Naive thymus-derived CD4-positive, alpha-beta T cell (primary cell): ENCODE measurements at regions of chr2 and their contacts with region 1.

Region 1: DNA sequence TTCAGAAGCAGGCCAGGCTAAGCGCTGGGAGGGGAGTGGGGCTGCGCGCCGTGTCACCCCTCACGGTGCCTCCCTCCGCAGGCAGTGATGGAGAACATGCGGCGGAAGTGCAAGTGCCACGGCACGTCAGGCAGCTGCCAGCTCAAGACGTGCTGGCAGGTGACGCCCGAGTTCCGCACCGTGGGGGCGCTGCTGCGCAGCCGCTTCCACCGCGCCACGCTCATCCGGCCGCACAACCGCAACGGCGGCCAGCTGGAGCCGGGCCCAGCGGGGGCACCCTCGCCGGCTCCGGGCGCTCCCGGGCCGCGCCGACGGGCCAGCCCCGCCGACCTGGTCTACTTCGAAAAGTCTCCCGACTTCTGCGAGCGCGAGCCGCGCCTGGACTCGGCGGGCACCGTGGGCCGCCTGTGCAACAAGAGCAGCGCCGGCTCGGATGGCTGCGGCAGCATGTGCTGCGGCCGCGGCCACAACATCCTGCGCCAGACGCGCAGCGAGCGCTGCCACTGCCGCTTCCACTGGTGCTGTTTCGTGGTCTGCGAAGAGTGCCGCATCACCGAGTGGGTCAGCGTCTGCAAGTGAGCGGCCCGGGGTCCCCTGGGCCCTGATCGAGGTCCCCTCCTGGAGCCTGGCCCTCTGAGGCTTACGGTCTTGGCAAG is 12.2 kb downstream of the WNT10A start:
- DNase-seq: peak; percentile 82 to 93 (median 91)
- ATAC-seq: peak; percentile 78
- H3K4me3 ChIP-seq: peak overlapping the region; percentile 48
- H3K4me3 Mint-ChIP-seq: peak overlapping the region; percentile 58 to 85 (median 75)
- H3K27ac ChIP-seq: peak overlapping the region; percentile 89
- H3K27ac Mint-ChIP-seq: peak overlapping the region; percentile 59 to 96 (median 89)
- H3K4me1 ChIP-seq: peaks cover 53 to 54% of the 10 kb centered on the region in 2 donors
- H3K4me1 Mint-ChIP-seq: peaks cover 38 to 56% (median 52%) of the 10 kb centered on the region in 7 donors
- H3K27me3 ChIP-seq: no peaks in the 10 kb centered on the region
- H3K27me3 Mint-ChIP-seq: peaks cover 0 to 76% (median 0%) of the 10 kb centered on the region in 5 donors

Region 2: GRCh38 chr2:218286570-218287459 is 606.0 kb before region 1 on chr2:
- CTCF ChIA-PET with region 1: no interaction called
- POLR2A ChIA-PET with region 1: interaction called, 4 read pairs
- intact Hi-C with region 1: loop called (anchors 5 to 10 kb)
- DNase-seq: peak; percentile 53 to 90 (median 78)
- ATAC-seq: peak; percentile 87
- H3K4me3 ChIP-seq: peak overlapping the region; percentile 66
- H3K4me3 Mint-ChIP-seq: peak overlapping the region; percentile 85 to 97 (median 94)
- H3K27ac ChIP-seq: peak overlapping the region; percentile 93
- H3K27ac Mint-ChIP-seq: peak overlapping the region; percentile 95 to 99 (median 99)
- H3K4me1 ChIP-seq: peaks cover 74 to 77% of the 10 kb centered on the region in 2 donors
- H3K4me1 Mint-ChIP-seq: peaks cover 53 to 87% (median 76%) of the 10 kb centered on the region in 7 donors
- H3K27me3 ChIP-seq: no peaks in the 10 kb centered on the region
- H3K27me3 Mint-ChIP-seq: no peaks in the 10 kb centered on the region

Region 3: DNA sequence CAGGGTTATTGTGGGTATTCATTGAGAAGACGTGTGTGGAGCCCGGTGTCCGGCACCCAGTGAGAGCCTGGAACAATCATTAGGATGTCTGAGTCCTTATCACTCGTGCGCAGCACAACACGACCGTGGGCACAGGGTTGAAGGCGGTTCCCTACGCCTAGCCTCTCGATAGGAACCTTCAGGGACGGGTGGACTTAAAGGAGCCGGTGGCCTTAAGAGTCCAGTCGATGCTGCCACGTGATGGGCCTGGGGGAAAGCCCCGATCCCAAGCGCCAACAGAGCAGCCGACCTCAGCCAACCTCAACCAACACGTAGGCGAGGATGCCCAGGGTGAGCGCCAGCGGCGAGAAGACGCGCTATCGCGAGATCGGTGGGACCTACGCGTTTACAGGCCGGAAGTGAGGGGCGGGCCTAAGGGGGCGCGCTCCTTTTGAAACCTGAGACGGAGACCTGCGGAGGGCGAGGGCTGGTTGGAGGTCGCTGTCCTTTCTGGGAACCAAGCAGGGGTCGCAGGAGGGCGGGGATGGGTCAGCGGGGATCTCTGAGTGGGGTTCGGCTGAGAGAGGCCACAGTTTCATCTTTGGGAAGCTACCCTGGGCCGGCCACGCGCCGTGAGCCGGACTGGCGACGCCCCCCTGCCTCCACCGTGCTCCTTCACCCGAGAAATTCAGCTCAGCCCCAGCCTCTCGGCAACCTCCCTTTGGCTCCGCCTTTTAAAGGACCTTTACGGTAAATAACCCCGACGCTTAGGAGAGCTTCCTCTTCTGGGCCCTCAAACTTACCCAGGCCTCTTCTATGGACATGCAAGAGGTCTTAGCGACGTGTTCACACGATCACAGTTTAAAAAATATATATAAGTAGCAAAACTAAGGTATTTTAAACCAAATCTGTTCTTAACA is 16.1 kb after region 1 on chr2:
- CTCF ChIA-PET with region 1: interaction called, 627 read pairs
- POLR2A ChIA-PET with region 1: interaction called, 3 read pairs
- intact Hi-C with region 1: loop called in 1 of 2 experiments (anchors 1 kb)
- DNase-seq: peak; percentile 78 to 89 (median 86)
- ATAC-seq: peak; percentile 98
- H3K4me3 ChIP-seq: peak overlapping the region; percentile 65
- H3K4me3 Mint-ChIP-seq: peak overlapping the region; percentile 82 to 94 (median 86)
- H3K27ac ChIP-seq: peak overlapping the region; percentile 53
- H3K27ac Mint-ChIP-seq: peak overlapping the region in 8 of 9 donors; percentile 10 to 88 (median 80)
- H3K4me1 ChIP-seq: peaks cover 10 to 12% of the 10 kb centered on the region in 2 donors
- H3K4me1 Mint-ChIP-seq: peaks cover 0 to 12% (median 6%) of the 10 kb centered on the region in 7 donors
- H3K27me3 ChIP-seq: no peaks in the 10 kb centered on the region
- H3K27me3 Mint-ChIP-seq: peaks cover 14 to 38% (median 16%) of the 10 kb centered on the region in 5 donors